Astrocyte of the cerebellum (primary cell): ENCODE measurements at regions of chr5 and their contacts with region 1.

Region 1: DNA sequence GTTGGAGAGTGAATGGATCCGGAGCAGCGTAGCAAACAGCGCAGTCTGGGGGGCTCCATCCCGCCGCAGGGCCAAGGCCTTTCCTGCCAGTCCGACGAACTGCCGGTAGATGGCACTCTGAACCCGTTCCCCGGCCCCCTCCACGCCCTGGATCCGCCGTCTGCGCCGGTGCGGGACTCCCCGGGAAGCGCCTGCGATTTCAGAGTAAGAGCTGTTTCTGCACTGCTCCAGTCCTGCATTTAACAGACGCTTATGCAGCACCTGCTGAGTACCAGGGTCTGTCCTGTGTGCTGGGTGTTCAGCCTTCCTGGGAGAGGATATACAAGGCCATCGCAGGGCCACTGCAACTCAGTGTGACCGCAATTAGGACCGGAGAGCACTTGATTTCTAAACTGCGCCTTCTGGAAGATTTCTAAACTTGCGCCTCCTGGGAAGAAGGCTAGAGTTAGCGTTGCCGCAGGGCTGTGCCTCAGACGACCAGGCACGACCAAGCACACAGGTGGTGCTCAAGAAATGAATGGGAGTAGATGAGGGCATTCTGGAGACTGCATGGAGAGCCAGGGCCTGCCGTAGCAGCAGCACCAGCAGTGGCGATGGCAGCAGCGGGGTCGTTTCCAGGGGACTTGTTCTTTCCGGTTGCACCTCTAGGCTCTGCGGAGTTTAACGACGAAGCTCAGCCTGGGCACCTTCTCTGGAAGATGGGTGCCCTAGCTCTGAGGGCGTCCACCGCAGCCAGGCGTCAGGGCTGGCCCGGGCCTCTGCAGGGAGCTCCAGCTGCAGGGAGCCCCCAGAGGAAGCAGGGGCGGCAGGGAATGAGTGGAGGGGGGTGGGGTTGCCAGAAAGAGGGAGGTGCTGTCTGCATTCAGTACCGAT is 14.3 kb upstream of the TIFAB start:
- DNase-seq: peak; percentile 33
- H3K4me3 ChIP-seq: no peak overlapping the region
- CTCF ChIP-seq: peak; percentile 92

Region 2: GRCh38 chr5:135551593-135552447 is 85.4 kb after region 1 on chr5:
- in situ Hi-C with region 1: loop called (anchors 5 kb)
- DNase-seq: peak; percentile 58
- H3K4me3 ChIP-seq: no peak overlapping the region
- CTCF ChIP-seq: peak; percentile 84

Region 3: DNA sequence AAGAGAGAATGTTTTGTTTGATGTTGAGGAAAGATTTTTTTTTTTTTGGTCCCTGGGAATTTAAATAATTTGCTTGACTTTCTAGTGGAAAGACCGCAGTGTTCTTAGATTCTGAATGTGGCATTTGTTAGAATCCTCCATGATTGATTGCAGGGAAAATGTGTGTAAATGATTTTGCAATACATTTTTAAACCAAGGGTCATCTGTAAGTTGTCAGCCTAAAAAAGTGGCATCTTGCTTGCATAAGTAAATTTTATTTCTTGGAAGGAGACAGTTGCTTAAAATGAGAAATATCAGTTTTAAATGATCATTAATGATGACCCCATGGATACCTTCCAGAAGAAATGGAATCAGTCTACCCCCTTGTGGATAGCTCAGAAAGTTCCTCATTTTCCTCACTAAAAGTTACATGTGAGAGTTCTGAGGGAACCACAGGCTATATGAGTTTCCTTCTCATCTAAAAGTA is 262.9 kb after region 1 on chr5:
- in situ Hi-C with region 1: loop called (anchors 25 kb)
- DNase-seq: no peak
- H3K4me3 ChIP-seq: no peak overlapping the region
- CTCF ChIP-seq: no peak

Region 4: DNA sequence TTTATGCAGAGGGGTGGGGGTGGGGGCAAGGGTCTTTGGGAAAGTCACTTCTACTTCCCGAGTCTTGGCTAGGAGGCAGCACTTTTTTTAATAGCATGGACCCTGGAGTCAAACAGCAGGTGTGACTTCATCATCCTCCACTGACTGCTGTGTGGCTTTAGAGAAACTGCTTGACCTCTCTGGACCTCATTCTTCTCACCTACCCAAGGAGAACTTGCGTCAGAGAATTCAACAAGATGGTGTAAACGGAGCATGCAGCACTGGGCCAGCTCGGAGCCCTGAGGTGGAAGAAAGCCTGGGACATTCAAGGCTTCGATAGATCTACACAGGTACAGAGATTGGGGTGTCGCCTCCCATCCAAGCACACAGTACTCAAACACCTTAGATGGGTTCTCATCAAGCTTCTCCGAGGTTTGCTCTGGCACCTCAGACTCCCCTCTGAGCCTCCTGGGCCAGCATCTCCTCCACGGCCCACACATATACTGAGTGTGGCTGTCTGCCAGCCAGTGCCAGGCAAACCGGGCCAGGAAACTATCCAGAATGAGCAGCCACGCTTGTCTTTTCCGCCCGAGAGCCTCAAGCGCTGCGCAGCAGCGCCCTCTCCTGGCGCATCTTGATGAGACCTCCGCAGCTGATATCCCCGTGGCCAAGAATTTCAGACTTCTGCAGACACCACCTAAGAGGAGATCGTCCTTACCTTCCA is 363.4 kb after region 1 on chr5:
- in situ Hi-C with region 1: loop called (anchors 25 kb)
- DNase-seq: peak; percentile 20
- H3K4me3 ChIP-seq: no peak overlapping the region
- CTCF ChIP-seq: peak; percentile 86